Naive thymus-derived CD4-positive, alpha-beta T cell (primary cell): ENCODE measurements at regions of chr17 and their contacts with region 1.

Region 1: DNA sequence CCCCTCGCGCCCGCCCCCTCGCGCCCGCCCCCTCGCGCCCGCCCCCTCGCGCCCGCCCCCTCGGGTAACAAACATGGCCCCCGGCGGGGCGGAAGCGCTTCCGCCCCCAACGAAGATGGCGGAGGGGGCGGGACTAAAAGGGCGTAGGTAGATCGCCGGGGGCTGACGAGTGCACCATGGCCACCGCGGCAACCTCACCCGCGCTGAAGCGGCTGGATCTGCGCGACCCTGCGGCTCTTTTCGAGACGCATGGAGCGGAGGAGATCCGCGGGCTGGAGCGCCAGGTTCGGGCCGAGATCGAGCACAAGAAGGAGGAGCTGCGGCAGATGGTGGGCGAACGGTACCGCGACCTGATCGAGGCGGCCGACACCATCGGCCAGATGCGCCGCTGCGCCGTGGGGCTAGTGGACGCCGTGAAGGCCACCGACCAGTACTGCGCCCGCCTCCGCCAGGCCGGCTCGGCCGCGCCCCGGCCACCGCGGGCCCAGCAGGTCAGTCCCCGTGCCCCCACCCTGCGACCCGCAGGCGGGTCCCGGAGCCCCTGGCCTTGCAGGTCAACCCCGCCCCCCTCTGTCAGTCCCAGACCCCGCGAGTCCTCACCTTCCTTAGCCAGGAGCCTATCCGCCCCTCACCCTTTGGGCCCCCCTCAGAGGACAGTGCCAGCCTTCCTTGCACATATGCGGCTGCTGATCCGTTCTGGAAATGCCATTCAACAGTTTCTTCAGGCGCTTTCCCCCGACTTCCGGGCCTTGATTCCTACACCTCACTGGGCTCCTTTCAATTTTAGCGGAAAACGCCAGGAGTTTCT is at the start of gene COG1:
- DNase-seq: peak; percentile 59 to 90 (median 70)
- ATAC-seq: peak; percentile 92
- H3K4me3 ChIP-seq: peak within 1 kb of the TSS; percentile 97
- H3K4me3 Mint-ChIP-seq: peak within 1 kb of the TSS; percentile 92 to 100 (median 96)
- H3K27ac ChIP-seq: peak within 1 kb of the TSS; percentile 91
- H3K27ac Mint-ChIP-seq: peak within 1 kb of the TSS; percentile 93 to 98 (median 97)
- H3K4me1 ChIP-seq: peaks cover 14 to 18% of the 10 kb centered on the region in 2 donors
- H3K4me1 Mint-ChIP-seq: peaks cover 17 to 47% (median 38%) of the 10 kb centered on the region in 7 donors
- H3K27me3 ChIP-seq: no peaks in the 10 kb centered on the region
- H3K27me3 Mint-ChIP-seq: no peaks in the 10 kb centered on the region
- total RNA-seq, gene COG1: 35.0 to 92.7 (median 85.8) TPM

Region 2: GRCh38 chr17:72556944-72557826 is 635.9 kb before region 1 on chr17:
- CTCF ChIA-PET with region 1: no interaction called
- POLR2A ChIA-PET with region 1: no interaction called
- intact Hi-C with region 1: loop called in 1 of 2 experiments (anchors 1 kb)
- DNase-seq: peak in 8 of 9 donors; percentile 25 to 59 (median 42)
- ATAC-seq: peak; percentile 64
- H3K4me3 ChIP-seq: no peak overlapping the region
- H3K4me3 Mint-ChIP-seq: no peak overlapping the region
- H3K27ac ChIP-seq: no peak overlapping the region
- H3K27ac Mint-ChIP-seq: no peak overlapping the region
- H3K4me1 ChIP-seq: no peaks in the 10 kb centered on the region
- H3K4me1 Mint-ChIP-seq: peaks cover 0 to 2% (median 0%) of the 10 kb centered on the region in 7 donors
- H3K27me3 ChIP-seq: no peaks in the 10 kb centered on the region
- H3K27me3 Mint-ChIP-seq: peaks cover 0 to 5% (median 4%) of the 10 kb centered on the region in 5 donors

Region 3: GRCh38 chr17:73092523-73093135 is 100.5 kb before region 1 on chr17 and contains the start of gene SLC39A11:
- CTCF ChIA-PET with region 1: no interaction called
- POLR2A ChIA-PET with region 1: interaction called, 3 read pairs
- intact Hi-C with region 1: loop called (anchors 1 to 2 kb)
- DNase-seq: peak; percentile 77 to 92 (median 85)
- ATAC-seq: peak; percentile 99
- H3K4me3 ChIP-seq: peak within 1 kb of the TSS; percentile 69
- H3K4me3 Mint-ChIP-seq: peak within 1 kb of the TSS; percentile 90 to 100 (median 96)
- H3K27ac ChIP-seq: peak within 1 kb of the TSS; percentile 63
- H3K27ac Mint-ChIP-seq: peak within 1 kb of the TSS; percentile 87 to 99 (median 93)
- H3K4me1 ChIP-seq: peaks cover 7 to 20% of the 10 kb centered on the region in 2 donors
- H3K4me1 Mint-ChIP-seq: peaks cover 0 to 40% (median 32%) of the 10 kb centered on the region in 7 donors
- H3K27me3 ChIP-seq: no peaks in the 10 kb centered on the region
- H3K27me3 Mint-ChIP-seq: peaks cover 0 to 13% (median 0%) of the 10 kb centered on the region in 5 donors
- total RNA-seq, gene SLC39A11: 16.9 to 36.7 (median 21.6) TPM

Region 4: GRCh38 chr17:73210002-73210678 is 17.0 kb after region 1 on chr17:
- CTCF ChIA-PET with region 1: interaction called, 3 read pairs
- POLR2A ChIA-PET with region 1: interaction called, 4 read pairs
- intact Hi-C with region 1: loop called in 1 of 2 experiments (anchors 2 kb)
- DNase-seq: peak in 4 of 9 donors; percentile 15 to 40 (median 22)
- ATAC-seq: peak; percentile 30
- H3K4me3 ChIP-seq: no peak overlapping the region
- H3K4me3 Mint-ChIP-seq: peak overlapping the region in 2 of 10 donors; percentile 11 to 13
- H3K27ac ChIP-seq: peak overlapping the region; percentile 53
- H3K27ac Mint-ChIP-seq: peak overlapping the region; percentile 61 to 95 (median 77)
- H3K4me1 ChIP-seq: peaks cover 4 to 10% of the 10 kb centered on the region in 2 donors
- H3K4me1 Mint-ChIP-seq: peaks cover 8 to 44% (median 23%) of the 10 kb centered on the region in 7 donors
- H3K27me3 ChIP-seq: no peaks in the 10 kb centered on the region
- H3K27me3 Mint-ChIP-seq: no peaks in the 10 kb centered on the region

Region 5: GRCh38 chr17:73255671-73256181 is 62.6 kb after region 1 on chr17:
- CTCF ChIA-PET with region 1: interaction called, 4 read pairs
- POLR2A ChIA-PET with region 1: no interaction called
- intact Hi-C with region 1: loop called in 1 of 2 experiments (anchors 1 kb)
- DNase-seq: peak in 7 of 9 donors; percentile 38 to 63 (median 48)
- ATAC-seq: peak; percentile 75
- H3K4me3 ChIP-seq: no peak overlapping the region
- H3K4me3 Mint-ChIP-seq: no peak overlapping the region
- H3K27ac ChIP-seq: no peak overlapping the region
- H3K27ac Mint-ChIP-seq: no peak overlapping the region
- H3K4me1 ChIP-seq: no peaks in the 10 kb centered on the region
- H3K4me1 Mint-ChIP-seq: peaks cover 0 to 4% (median 0%) of the 10 kb centered on the region in 7 donors
- H3K27me3 ChIP-seq: no peaks in the 10 kb centered on the region
- H3K27me3 Mint-ChIP-seq: no peaks in the 10 kb centered on the region

Region 6: GRCh38 chr17:73371285-73371684 is 178.2 kb after region 1 on chr17:
- CTCF ChIA-PET with region 1: interaction called, 10 read pairs
- POLR2A ChIA-PET with region 1: no interaction called
- intact Hi-C with region 1: loop called (anchors 1 kb)
- DNase-seq: no peak
- ATAC-seq: no peak
- H3K4me3 ChIP-seq: no peak overlapping the region
- H3K4me3 Mint-ChIP-seq: no peak overlapping the region
- H3K27ac ChIP-seq: no peak overlapping the region
- H3K27ac Mint-ChIP-seq: no peak overlapping the region
- H3K4me1 ChIP-seq: no peaks in the 10 kb centered on the region
- H3K4me1 Mint-ChIP-seq: peaks cover 0 to 3% (median 0%) of the 10 kb centered on the region in 7 donors
- H3K27me3 ChIP-seq: no peaks in the 10 kb centered on the region
- H3K27me3 Mint-ChIP-seq: peaks cover 0 to 6% (median 0%) of the 10 kb centered on the region in 5 donors

Region 7: DNA sequence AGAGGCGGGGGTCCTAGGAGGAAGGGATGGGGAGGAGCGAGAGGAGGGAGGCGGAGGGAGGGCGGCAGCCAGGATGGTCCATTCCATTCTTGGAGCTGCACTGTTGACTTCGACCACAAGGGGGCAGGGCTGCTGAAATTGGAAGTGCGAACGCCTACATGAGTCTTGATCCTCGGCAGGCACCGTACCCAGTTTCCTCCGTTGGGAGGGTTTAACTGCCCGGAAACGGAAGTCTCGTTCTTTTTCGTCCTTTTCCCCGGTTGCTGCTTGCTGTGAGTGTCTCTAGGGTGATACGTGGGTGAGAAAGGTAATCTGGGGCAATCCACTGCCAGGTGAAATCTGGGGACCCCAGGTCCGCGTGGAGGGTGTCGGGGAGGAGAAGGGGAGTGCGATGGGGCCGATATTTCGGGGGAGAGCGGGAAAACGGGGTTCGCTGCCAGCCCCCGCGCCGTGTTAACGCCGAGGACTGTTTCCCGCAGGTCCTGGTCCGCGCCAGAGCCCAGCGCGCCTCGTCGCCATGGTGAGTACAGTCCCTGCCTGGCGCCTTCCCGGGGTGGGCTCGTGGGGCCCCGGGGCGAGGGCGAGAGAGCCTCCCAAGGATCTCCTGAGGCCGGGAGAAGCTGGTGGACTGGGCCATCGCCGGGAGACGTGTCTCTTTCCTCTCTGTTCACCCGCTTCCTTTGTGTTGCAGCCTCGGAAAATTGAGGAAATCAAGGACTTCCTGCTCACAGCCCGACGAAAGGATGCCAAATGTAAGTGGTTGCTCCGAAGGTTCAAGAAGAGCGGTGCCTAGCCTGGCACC is 1010.5 kb after region 1 on chr17 and contains the start of gene RPL38:
- CTCF ChIA-PET with region 1: no interaction called
- POLR2A ChIA-PET with region 1: no interaction called
- intact Hi-C with region 1: loop called (anchors 1 to 5 kb)
- DNase-seq: peak; percentile 83 to 95 (median 94)
- ATAC-seq: peak; percentile 98
- H3K4me3 ChIP-seq: peak within 1 kb of the TSS; percentile 89
- H3K4me3 Mint-ChIP-seq: peak within 1 kb of the TSS; percentile 85 to 100 (median 98)
- H3K27ac ChIP-seq: peak within 1 kb of the TSS; percentile 86
- H3K27ac Mint-ChIP-seq: peak within 1 kb of the TSS; percentile 89 to 98 (median 96)
- H3K4me1 ChIP-seq: peaks cover 16 to 20% of the 10 kb centered on the region in 2 donors
- H3K4me1 Mint-ChIP-seq: peaks cover 24 to 49% (median 34%) of the 10 kb centered on the region in 7 donors
- H3K27me3 ChIP-seq: peaks cover 0 to 5% of the 10 kb centered on the region in 2 donors
- H3K27me3 Mint-ChIP-seq: peaks cover 8 to 16% (median 11%) of the 10 kb centered on the region in 5 donors
- total RNA-seq, gene RPL38: 1,097 to 2,553 (median 2,002) TPM